PC-9 (cell line): ENCODE measurements at regions of chr16 and their contacts with region 1.

Region 1: DNA sequence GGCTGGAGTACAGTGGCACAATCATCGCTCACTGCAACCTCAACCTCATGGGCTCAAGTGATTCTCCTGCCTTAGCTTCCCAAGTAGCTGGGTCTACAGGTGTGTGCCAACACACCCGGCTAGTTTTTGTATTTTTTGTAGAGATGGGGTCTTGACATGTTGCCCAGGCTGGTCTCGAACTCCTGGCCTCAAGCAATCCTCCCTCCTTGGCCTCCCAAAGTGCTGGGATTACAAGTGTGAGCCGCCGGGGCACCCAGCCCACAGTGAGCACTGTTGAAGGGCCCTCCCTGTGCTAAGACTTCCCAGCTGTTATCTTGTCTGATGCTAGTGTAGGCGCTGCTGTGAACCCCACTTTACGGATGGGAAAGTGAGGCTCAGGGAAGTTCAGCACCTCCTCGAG is 8.0 kb downstream of the CASKIN1 start:
- DNase-seq: no peak
- H3K4me3 ChIP-seq: no peak overlapping the region
- H3K27ac ChIP-seq: no peak overlapping the region
- H3K4me1 ChIP-seq: no peaks in the 10 kb centered on the region
- H3K27me3 ChIP-seq: no peaks in the 10 kb centered on the region
- CTCF ChIP-seq: no peak

Region 2: DNA sequence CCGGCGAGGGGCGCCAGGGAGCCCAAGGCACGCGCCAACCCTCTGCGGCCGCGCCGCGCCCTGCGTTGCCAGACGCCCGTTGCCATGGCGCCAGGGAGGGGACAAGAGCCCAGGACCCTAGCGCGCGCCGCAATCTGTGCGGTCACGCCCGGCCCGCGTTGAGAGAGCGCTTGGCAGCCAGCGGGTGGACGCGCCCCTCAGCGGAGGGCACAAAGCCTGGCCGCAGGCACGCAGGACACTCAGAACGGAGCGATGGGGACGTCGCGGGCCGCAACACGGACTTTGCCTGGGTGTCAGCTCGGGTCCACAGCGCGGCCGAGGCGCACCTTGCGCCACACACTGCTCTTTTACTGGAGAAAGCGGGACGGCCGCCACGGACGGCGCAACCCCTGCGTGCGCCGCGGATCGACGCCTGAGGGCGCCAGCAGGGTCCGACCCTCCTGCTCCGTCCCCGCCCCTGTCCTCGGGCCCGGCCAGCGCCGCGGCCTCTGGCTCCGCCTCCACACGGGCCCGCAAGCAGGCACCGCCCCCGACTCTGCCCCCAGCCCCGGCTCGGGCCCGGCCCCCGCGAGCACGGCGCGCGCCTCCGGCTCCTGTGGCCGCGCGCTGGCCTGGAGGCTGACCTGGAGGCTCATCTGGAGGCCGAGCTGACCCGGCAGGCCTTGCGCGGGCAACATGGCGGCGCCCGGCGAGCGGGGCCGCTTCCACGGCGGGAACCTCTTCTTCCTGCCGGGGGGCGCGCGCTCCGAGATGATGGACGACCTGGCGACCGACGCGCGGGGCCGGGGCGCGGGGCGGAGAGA is 204.7 kb before region 1 on chr16 and contains the start of gene GFER:
- CTCF ChIA-PET with region 1: no interaction called
- POLR2A ChIA-PET with region 1: no interaction called
- intact Hi-C with region 1: no loop called
- DNase-seq: peak; percentile 73 to 98
- H3K4me3 ChIP-seq: peak within 1 kb of the TSS; percentile 93
- H3K27ac ChIP-seq: no peak within 1 kb of the TSS
- H3K4me1 ChIP-seq: peaks cover 67% of the 10 kb centered on the region
- H3K27me3 ChIP-seq: no peaks in the 10 kb centered on the region
- CTCF ChIP-seq: no peak; the same call in 1 of the 2 replicates
- total RNA-seq, gene GFER: 59.7 and 63.8 TPM in 2 replicates

Region 3: GRCh38 chr16:2223375-2224182 is 35.2 kb after region 1 on chr16 and contains the start of gene E4F1:
- CTCF ChIA-PET with region 1: interaction called, 17 read pairs
- POLR2A ChIA-PET with region 1: interaction called, 5 read pairs
- intact Hi-C with region 1: no loop called
- DNase-seq: peak; percentile 96 to 100
- H3K4me3 ChIP-seq: peak within 1 kb of the TSS; percentile 83
- H3K27ac ChIP-seq: peak within 1 kb of the TSS; percentile 24
- H3K4me1 ChIP-seq: peaks cover 20% of the 10 kb centered on the region
- H3K27me3 ChIP-seq: no peaks in the 10 kb centered on the region
- CTCF ChIP-seq: no peak
- total RNA-seq, gene E4F1: 38.8 and 41.1 TPM in 2 replicates